PC-9 (cell line): ENCODE measurements at regions of chr20 and their contacts with region 1.

Region 1: GRCh38 chr20:14589383-14589782 is 252.0 kb upstream of the FLRT3 start:
- DNase-seq: no peak
- H3K4me3 ChIP-seq: no peak overlapping the region
- H3K27ac ChIP-seq: no peak overlapping the region
- H3K4me1 ChIP-seq: no peaks in the 10 kb centered on the region
- H3K27me3 ChIP-seq: no peaks in the 10 kb centered on the region
- CTCF ChIP-seq: no peak

Region 2: DNA sequence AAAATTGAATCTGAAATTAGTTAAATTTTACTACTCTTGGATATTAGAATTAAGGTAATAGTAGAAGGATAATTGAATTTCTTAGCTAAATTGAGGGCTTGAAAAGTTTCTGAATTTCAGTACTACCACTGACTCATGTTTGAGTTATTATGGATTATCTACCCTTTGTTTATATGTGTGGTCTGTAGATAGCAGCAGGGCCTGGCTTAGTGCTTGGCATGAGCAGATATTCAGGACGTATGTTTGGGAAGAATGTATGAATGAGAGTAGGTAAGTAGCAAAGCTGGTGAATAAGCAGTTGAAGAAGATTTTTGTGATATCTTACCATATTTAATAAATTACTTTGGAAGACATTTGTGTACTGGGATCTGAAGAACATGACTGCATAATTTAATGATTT is 441.3 kb before region 1 on chr20:
- CTCF ChIA-PET with region 1: no interaction called
- POLR2A ChIA-PET with region 1: no interaction called
- intact Hi-C with region 1: loop called (anchors 5 kb)
- DNase-seq: no peak
- H3K4me3 ChIP-seq: no peak overlapping the region
- H3K27ac ChIP-seq: no peak overlapping the region
- H3K4me1 ChIP-seq: peaks cover 10% of the 10 kb centered on the region; the same call in 1 of the 2 replicates
- H3K27me3 ChIP-seq: no peaks in the 10 kb centered on the region
- CTCF ChIP-seq: no peak

Region 3: DNA sequence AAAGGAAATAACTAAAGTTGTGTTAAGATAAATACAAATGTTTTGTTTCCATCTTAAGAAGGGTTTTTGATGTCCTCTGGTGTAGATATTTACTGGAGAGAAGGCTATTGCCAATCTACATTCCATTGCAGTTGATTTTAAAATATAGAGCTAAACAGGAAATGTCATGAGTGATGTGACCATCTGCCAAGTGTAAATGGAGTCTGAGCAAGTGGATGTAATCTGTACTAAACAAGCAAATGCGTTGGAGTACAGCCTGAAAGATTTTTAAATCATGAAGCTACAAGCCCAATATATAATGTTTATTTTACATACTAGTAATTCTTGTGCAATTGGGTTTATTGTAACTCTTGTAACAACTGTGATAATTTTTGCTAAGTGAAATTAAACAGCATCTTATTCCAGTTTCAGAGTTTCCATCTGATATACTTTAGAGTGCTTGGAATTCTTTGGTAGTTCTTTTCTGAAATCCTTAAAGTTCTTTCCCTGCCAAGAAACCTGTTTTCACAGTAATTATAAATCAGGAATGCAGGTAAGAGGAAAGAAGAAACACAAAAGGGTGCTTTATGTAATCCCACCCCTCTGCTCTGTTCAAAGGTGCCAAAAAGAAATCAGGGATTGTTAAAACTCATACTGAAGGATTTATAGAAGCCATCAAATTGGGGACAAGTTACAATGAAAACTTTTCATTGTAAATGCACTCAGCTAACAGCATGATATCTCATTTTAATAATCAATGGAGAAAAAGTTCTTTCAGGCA is 204.8 kb before region 1 on chr20:
- CTCF ChIA-PET with region 1: no interaction called
- POLR2A ChIA-PET with region 1: no interaction called
- intact Hi-C with region 1: no loop called
- DNase-seq: no peak
- H3K4me3 ChIP-seq: no peak overlapping the region
- H3K27ac ChIP-seq: no peak overlapping the region
- H3K4me1 ChIP-seq: no peaks in the 10 kb centered on the region
- H3K27me3 ChIP-seq: no peaks in the 10 kb centered on the region
- CTCF ChIP-seq: no peak